Calu3 (cell line): ENCODE measurements at regions of chr17 and their contacts with region 1.

Region 1: DNA sequence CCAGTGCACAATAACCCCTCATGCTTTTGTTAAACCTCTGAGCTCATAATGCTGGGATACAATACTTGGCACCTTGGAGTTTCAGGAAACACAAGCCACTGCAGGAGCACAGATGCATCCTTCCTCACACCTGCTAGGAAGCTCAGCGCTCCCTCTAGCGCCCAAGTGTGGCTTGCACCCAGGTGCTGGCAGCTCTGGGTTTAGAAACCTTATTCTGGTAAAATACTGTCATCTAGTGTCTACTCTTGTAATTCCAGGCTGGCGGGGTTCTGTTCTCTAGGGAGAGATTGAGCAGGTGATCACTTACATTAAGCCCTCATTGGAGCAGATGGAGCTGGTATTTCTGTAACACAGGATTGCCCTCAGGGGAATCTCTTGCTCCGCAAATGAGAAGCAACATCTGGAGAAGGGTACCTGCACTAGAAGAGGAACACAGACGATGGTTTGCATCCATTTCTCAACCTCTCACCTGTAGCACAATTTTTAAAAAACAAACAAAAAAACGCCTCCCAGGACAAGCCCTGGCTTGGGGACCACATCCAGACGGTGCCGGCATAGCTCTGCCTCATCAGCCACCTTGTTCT is 1.5 kb downstream of the CCL1 start:
- DNase-seq: peak; percentile 91
- H3K4me3 Mint-ChIP-seq: no peak overlapping the region
- H3K27ac Mint-ChIP-seq: no peak overlapping the region
- H3K4me1 Mint-ChIP-seq: no peaks in the 10 kb centered on the region
- H3K27me3 Mint-ChIP-seq: peaks cover 83% of the 10 kb centered on the region
- CTCF ChIP-seq: peak; percentile 84

Region 2: GRCh38 chr17:34081269-34081668 is 280.3 kb before region 1 on chr17:
- CTCF ChIA-PET with region 1: no interaction called
- intact Hi-C with region 1: loop called (anchors 5 kb)
- DNase-seq: peak; percentile 16
- H3K4me3 Mint-ChIP-seq: no peak overlapping the region
- H3K27ac Mint-ChIP-seq: no peak overlapping the region
- H3K4me1 Mint-ChIP-seq: no peaks in the 10 kb centered on the region
- H3K27me3 Mint-ChIP-seq: peaks cover 36% of the 10 kb centered on the region
- CTCF ChIP-seq: no peak

Region 3: GRCh38 chr17:34171245-34171818 is 190.2 kb before region 1 on chr17:
- CTCF ChIA-PET with region 1: interaction called, 24 read pairs
- intact Hi-C with region 1: loop called (anchors 1 kb)
- DNase-seq: peak; percentile 61
- H3K4me3 Mint-ChIP-seq: no peak overlapping the region
- H3K27ac Mint-ChIP-seq: no peak overlapping the region
- H3K4me1 Mint-ChIP-seq: no peaks in the 10 kb centered on the region
- H3K27me3 Mint-ChIP-seq: peaks cover 88% of the 10 kb centered on the region
- CTCF ChIP-seq: peak; percentile 77

Region 4: DNA sequence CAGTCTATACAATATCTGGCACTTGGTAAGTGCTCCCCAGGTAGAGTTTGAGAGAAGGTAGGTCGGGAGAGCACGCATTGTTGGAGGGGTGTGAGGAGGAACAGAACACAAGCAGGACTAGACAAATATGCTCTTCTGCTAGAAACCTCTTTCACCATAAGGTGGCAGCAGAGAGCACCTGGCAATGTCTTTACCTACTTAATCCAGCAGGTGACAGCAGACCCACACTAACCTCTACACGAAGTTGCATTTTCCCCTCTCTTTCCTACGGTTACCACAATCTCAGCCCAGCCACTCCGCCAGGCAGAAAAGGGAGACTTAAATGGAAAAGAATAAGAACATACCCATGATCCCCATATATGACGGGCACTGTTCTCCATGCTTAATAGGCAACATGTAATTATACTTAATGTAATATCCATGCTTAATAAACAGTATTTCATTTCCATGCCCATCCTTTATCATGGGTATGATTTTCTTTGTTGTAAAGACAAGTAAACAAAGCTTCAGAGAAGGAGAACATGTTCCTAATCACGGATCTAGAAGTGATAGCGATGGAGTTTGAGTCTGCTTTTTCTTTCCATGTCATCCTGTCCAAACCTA is 161.5 kb before region 1 on chr17:
- CTCF ChIA-PET with region 1: interaction called, 95 read pairs
- intact Hi-C with region 1: loop called (anchors 1 kb)
- DNase-seq: peak; percentile 71
- H3K4me3 Mint-ChIP-seq: no peak overlapping the region
- H3K27ac Mint-ChIP-seq: no peak overlapping the region
- H3K4me1 Mint-ChIP-seq: no peaks in the 10 kb centered on the region
- H3K27me3 Mint-ChIP-seq: peaks cover 66% of the 10 kb centered on the region
- CTCF ChIP-seq: peak; percentile 99

Region 5: GRCh38 chr17:34393401-34393800 is 31.8 kb after region 1 on chr17:
- CTCF ChIA-PET with region 1: no interaction called
- intact Hi-C with region 1: no loop called
- DNase-seq: no peak
- H3K4me3 Mint-ChIP-seq: no peak overlapping the region
- H3K27ac Mint-ChIP-seq: no peak overlapping the region
- H3K4me1 Mint-ChIP-seq: no peaks in the 10 kb centered on the region
- H3K27me3 Mint-ChIP-seq: peaks cover 98% of the 10 kb centered on the region
- CTCF ChIP-seq: no peak